OCI-LY7 (cell line): ENCODE measurements at regions of chr12 and their contacts with region 1.

Region 1: GRCh38 chr12:88202500-88202899 is 60.4 kb downstream of the TMTC3 start:
- DNase-seq: no peak
- H3K4me3 ChIP-seq: no peak overlapping the region
- H3K27ac ChIP-seq: no peak overlapping the region
- H3K4me1 ChIP-seq: no peaks in the 10 kb centered on the region
- CTCF ChIP-seq: no peak

Region 2: GRCh38 chr12:88228720-88229119 is 26.2 kb after region 1 on chr12:
- CTCF ChIA-PET with region 1: no interaction called
- POLR2A ChIA-PET with region 1: no interaction called
- intact Hi-C with region 1: loop called (anchors 1 kb)
- DNase-seq: no peak
- H3K4me3 ChIP-seq: no peak overlapping the region
- H3K27ac ChIP-seq: no peak overlapping the region
- H3K4me1 ChIP-seq: peaks cover 5% of the 10 kb centered on the region
- CTCF ChIP-seq: peak; percentile 38; the same call in 1 of the 2 replicates